ENCODE measurements at regions of chr11 and their contacts with region 1.

Region 1: DNA sequence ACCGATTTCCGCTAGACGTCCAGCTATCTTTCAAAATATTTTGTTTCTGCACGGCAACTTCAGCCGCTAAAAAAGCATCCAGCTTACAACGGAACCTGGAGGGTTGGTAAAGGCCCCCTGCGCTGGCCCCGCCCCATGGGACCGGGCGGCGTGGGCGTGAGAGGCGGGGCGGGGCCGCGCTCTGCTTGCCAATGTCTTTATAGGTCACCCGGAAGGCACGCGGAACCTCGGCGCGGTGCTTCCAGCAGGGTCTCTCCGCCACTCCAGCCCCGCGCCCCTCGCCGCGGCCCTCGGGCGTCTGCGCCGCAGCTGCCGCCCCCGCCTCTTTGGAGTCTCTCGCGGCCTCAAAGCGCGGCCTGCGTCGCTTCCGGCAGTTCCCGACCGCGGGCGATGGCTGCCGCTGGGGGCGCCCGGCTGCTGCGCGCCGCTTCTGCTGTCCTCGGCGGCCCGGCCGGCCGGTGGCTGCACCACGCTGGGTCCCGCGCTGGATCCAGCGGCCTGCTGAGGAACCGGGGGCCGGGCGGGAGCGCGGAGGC is at the start of gene FDX1:
- DNase-seq: peak; percentile 93 to 96
- H3K4me3 ChIP-seq: peak within 1 kb of the TSS; percentile 61
- H3K4me3 Mint-ChIP-seq: peak within 1 kb of the TSS; percentile 100
- H3K27ac Mint-ChIP-seq: peak within 1 kb of the TSS; percentile 99
- H3K4me1 ChIP-seq: peaks cover 38% of the 10 kb centered on the region
- H3K4me1 Mint-ChIP-seq: peaks cover 51% of the 10 kb centered on the region
- H3K27me3 ChIP-seq: no peaks in the 10 kb centered on the region
- H3K27me3 Mint-ChIP-seq: no peaks in the 10 kb centered on the region
- CTCF ChIP-seq: peak; percentile 42 to 62
- total RNA-seq, gene FDX1: 29.5 and 29.9 TPM in 2 replicates

Region 2: DNA sequence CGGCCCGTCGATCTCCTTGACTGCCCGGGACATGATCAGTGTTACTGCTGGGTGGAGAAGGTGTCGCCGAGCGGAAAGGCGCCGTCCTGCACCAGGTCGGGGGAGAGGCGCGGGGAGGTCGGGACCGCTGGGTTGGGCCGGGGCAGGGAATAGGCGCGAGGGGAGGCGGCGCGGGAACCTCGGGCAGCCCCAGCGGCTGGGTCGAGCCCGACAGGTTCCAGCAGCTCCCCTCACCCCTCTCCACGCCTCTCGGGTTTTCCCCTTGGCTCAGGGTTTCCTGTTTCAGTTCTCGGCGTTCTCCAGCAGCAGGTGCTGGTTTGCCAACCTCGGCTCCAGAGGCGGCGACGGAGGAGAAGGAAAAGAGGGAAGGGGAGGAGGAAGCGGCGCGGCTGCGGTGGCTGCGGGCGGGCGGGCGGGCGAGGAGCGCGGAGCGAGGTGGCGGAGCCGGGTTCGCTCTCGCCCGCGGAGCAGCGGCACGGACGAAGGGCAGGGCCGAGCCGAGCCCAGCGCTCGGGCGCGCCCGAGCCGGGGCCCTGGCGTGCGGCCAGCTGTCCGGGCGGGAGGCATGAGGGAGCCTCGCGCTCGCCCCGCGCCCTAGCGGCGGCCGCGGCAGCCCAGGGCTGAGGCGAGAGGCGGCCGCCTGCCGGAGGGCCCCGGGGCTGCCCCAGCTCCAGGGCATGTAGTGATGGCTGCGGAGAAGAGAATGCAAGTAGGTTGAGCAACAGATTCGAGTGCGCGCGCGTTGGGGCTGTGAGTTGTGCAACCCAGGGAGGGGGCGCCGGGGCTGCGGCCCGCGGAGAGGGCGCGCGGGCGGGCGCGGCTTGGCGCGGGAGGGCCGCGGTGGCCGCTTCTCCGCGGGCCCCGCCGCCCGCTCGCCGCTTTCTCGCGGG is 337.0 kb before region 1 on chr11 and contains the start of gene ZC3H12C:
- CTCF ChIA-PET with region 1: interaction called, 3 read pairs
- POLR2A ChIA-PET with region 1: no interaction called
- intact Hi-C with region 1: loop called (anchors 5 kb)
- DNase-seq: peak; percentile 97
- H3K4me3 ChIP-seq: peak within 1 kb of the TSS; percentile 79
- H3K4me3 Mint-ChIP-seq: peak within 1 kb of the TSS; percentile 95
- H3K27ac Mint-ChIP-seq: peak within 1 kb of the TSS; percentile 94
- H3K4me1 ChIP-seq: peaks cover 17% of the 10 kb centered on the region
- H3K4me1 Mint-ChIP-seq: peaks cover 6% of the 10 kb centered on the region
- H3K27me3 ChIP-seq: 0 out of 2 replicates have a peak, but pooled peaks cover 1% of the 10 kb centered on the region
- H3K27me3 Mint-ChIP-seq: no peaks in the 10 kb centered on the region
- CTCF ChIP-seq: peak in 1 of 2 experiments; percentile 73
- total RNA-seq, gene ZC3H12C: 11.4 and 11.7 TPM in 2 replicates

Region 3: DNA sequence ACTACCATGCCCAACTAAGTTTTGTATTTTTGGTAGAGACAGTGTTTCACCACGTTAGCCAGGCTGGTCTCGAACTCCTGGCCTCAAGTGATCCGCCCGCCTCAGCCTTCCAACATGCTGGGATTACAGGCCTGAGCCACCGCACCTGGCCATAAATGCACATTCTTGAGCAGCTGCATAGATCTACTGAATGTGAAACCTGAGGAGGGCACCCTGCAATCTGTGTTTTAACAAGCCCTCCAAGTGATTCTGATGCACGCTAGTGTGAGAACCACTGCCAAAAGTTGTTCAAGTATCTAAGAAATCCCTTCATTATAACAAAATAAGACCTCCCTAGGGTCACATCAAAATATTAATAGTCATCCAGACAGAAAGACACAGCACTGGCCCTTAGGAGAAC is 222.7 kb before region 1 on chr11:
- CTCF ChIA-PET with region 1: no interaction called
- POLR2A ChIA-PET with region 1: no interaction called
- intact Hi-C with region 1: loop called (anchors 2 kb)
- DNase-seq: no peak
- H3K4me3 ChIP-seq: no peak overlapping the region
- H3K4me3 Mint-ChIP-seq: no peak overlapping the region
- H3K27ac Mint-ChIP-seq: no peak overlapping the region
- H3K4me1 ChIP-seq: no peaks in the 10 kb centered on the region; the same call in 1 of the 2 replicates
- H3K4me1 Mint-ChIP-seq: peaks cover 11% of the 10 kb centered on the region
- H3K27me3 ChIP-seq: no peaks in the 10 kb centered on the region
- H3K27me3 Mint-ChIP-seq: no peaks in the 10 kb centered on the region
- CTCF ChIP-seq: no peak

Region 4: GRCh38 chr11:110251837-110252236 is 178.0 kb before region 1 on chr11:
- CTCF ChIA-PET with region 1: interaction called, 3 read pairs
- POLR2A ChIA-PET with region 1: no interaction called
- intact Hi-C with region 1: loop called (anchors 5 kb)
- DNase-seq: no peak
- H3K4me3 ChIP-seq: no peak overlapping the region
- H3K4me3 Mint-ChIP-seq: no peak overlapping the region
- H3K27ac Mint-ChIP-seq: no peak overlapping the region
- H3K4me1 ChIP-seq: no peaks in the 10 kb centered on the region
- H3K4me1 Mint-ChIP-seq: no peaks in the 10 kb centered on the region
- H3K27me3 ChIP-seq: no peaks in the 10 kb centered on the region
- H3K27me3 Mint-ChIP-seq: no peaks in the 10 kb centered on the region
- CTCF ChIP-seq: no peak

Region 5: DNA sequence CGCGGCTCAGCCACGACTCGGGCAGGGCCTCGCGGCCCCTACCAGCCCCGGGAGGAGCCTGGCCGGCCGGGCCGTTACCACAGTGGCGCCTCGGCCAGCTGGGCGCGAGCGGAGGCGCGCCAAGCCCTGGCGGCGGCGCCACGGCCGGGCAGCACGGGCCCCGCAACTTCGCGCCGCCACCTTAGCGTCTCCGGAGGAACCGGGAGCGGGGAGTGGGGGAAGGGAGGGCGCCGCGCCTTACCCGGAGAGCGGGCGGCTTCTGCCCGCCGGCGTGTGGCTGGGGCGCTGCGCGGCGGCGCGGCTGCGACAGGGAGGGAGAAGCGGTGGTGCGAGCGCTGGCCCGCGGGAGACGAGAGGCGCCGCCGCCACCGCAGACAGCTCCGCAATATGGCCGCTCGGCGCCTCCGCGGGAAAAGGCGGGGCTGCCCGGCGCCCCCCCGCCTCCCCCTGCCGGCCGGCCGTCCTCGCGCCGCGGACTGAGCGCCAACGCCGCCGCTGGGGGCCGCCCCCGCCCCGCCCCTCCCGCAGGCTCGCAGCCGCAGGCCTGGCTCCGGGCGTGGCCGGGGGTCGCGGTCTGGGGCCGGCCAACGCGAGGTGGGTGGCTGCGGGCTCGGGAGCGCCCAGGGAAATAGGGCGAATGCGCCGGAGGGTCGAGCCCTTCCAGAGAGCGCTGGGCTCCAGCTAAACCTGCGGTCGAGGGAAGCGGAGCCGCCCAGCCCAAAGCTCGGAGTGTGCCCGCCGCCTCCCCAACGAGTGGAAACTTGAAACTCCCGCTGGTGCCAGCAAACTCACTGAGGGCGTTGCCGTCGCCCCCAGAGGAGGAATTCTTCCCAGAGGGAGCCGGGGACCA is 133.3 kb before region 1 on chr11 and contains the start of gene RDX:
- CTCF ChIA-PET with region 1: interaction called, 3 read pairs
- POLR2A ChIA-PET with region 1: interaction called, 3 read pairs
- intact Hi-C with region 1: loop called (anchors 2 kb)
- DNase-seq: peak; percentile 88 to 91
- H3K4me3 ChIP-seq: peak within 1 kb of the TSS; percentile 98
- H3K4me3 Mint-ChIP-seq: peak within 1 kb of the TSS; percentile 91
- H3K27ac Mint-ChIP-seq: peak within 1 kb of the TSS; percentile 98
- H3K4me1 ChIP-seq: peaks cover 51% of the 10 kb centered on the region
- H3K4me1 Mint-ChIP-seq: peaks cover 62% of the 10 kb centered on the region
- H3K27me3 ChIP-seq: no peaks in the 10 kb centered on the region
- H3K27me3 Mint-ChIP-seq: no peaks in the 10 kb centered on the region
- CTCF ChIP-seq: peak in 1 of 2 experiments; percentile 24
- total RNA-seq, gene RDX: 250 and 251 TPM in 2 replicates

Region 6: DNA sequence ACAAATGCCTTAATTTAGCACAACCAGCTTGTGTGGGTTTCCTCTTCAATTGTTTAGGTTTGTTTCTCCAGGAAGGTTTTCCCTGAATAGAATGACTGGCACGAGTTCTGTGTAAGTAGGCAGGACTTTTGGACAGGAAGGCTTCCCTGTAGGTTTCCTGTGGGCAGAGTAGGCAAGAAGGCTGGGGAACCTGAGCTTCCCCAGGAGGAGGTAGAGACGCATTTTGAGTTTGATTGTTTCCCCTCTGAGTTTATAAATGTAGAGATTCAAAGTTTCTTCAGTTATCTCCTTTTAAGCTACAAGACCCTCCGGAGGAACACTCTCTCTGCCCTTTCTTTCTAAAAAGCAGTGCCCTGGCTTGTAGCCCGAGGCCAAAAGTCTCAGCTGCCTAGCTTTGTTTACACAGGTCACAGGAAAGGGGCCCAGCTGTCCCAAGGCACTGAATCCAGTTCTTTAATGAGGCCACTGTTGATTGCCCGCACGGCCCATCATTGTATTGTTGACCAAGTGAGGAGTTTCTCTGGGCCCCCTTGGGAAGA is 66.8 kb before region 1 on chr11:
- CTCF ChIA-PET with region 1: interaction called, 10 read pairs
- POLR2A ChIA-PET with region 1: no interaction called
- intact Hi-C with region 1: no loop called
- DNase-seq: peak; percentile 78 to 87
- H3K4me3 ChIP-seq: no peak overlapping the region
- H3K4me3 Mint-ChIP-seq: peak overlapping the region; percentile 61
- H3K27ac Mint-ChIP-seq: peak overlapping the region; percentile 91
- H3K4me1 ChIP-seq: peaks cover 38% of the 10 kb centered on the region
- H3K4me1 Mint-ChIP-seq: peaks cover 58% of the 10 kb centered on the region
- H3K27me3 ChIP-seq: no peaks in the 10 kb centered on the region
- H3K27me3 Mint-ChIP-seq: no peaks in the 10 kb centered on the region
- CTCF ChIP-seq: no peak

Region 7: DNA sequence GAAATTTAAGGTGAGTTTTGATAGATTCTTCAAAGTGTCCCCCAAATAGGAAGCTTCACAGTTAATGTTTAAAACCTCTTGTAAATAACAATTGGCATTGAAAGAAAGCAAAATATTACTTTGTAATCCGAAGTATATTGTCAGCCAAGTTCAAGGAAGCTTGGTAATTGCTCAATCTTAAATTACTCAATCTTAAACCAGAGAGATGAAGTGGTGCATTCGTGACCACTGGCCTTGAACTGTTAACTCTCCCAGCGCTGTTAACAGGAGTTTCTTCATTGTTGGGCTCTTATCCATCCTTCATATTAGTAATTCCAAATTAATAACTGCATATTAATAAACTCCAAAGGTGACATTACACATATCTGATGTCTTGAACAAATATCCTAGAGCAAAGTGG is 20.6 kb before region 1 on chr11:
- CTCF ChIA-PET with region 1: interaction called, 3 read pairs
- POLR2A ChIA-PET with region 1: no interaction called
- intact Hi-C with region 1: loop called (anchors 2 kb)
- DNase-seq: no peak
- H3K4me3 ChIP-seq: no peak overlapping the region
- H3K4me3 Mint-ChIP-seq: no peak overlapping the region
- H3K27ac Mint-ChIP-seq: no peak overlapping the region
- H3K4me1 ChIP-seq: peaks cover 13% of the 10 kb centered on the region
- H3K4me1 Mint-ChIP-seq: peaks cover 14% of the 10 kb centered on the region
- H3K27me3 ChIP-seq: no peaks in the 10 kb centered on the region
- H3K27me3 Mint-ChIP-seq: no peaks in the 10 kb centered on the region
- CTCF ChIP-seq: no peak

Measured in Caco-2 (cell line).